GM12878 (cell line): ENCODE measurements at regions of chr2 and their contacts with region 1.

Region 1: GRCh38 chr2:8049851-8050571 is 631.8 kb upstream of the ID2 start:
- DNase-seq: peak; percentile 79
- ATAC-seq: peak; percentile 98
- H3K4me3 ChIP-seq: no peak overlapping the region
- H3K27ac ChIP-seq: peak overlapping the region; percentile 59
- H3K4me1 ChIP-seq: peaks cover 21% of the 10 kb centered on the region
- H3K27me3 ChIP-seq: no peaks in the 10 kb centered on the region
- CTCF ChIP-seq: no peak
- EP300 ChIP-seq: peak; percentile 65 to 69; a peak in 3 of 4 replicates
- POLR2A ChIP-seq: no peak
- RAD21 ChIP-seq: no peak

Region 2: DNA sequence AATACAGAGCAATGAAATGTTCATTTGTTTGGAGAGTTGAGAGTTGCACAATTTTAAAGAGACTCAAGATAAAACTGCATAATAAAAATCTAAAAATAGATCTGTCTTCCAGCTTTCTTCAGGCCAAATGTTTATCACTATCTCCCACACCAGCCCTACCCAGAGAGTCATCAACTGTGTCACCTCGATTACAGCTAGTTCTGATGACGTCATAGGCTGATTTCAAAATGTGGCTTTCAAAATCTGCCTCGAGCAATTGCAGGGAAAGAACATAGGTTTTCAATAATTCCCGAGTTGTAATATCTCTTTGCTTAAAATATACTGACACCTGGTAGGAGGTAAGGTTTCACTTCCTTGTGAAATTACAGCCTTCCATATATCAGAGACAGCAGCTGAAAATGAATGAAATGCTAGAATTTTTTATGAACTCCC is 45.7 kb before region 1 on chr2:
- CTCF ChIA-PET with region 1: interaction called, 3 read pairs
- POLR2A ChIA-PET with region 1: no interaction called
- RAD21 ChIA-PET with region 1: interaction called, 4 read pairs
- SMC1A ChIA-PET with region 1: interaction called, 5 read pairs
- in situ Hi-C with region 1: no loop called
- intact Hi-C with region 1: loop called (anchors 1 kb)
- DNase-seq: no peak
- ATAC-seq: peak; percentile 46
- H3K4me3 ChIP-seq: no peak overlapping the region
- H3K27ac ChIP-seq: no peak overlapping the region
- H3K4me1 ChIP-seq: peaks cover 4% of the 10 kb centered on the region; the same call in 1 of the 2 replicates
- H3K27me3 ChIP-seq: no peaks in the 10 kb centered on the region
- CTCF ChIP-seq: no peak
- EP300 ChIP-seq: peak; percentile 69 to 79; a peak in 2 of 4 replicates
- POLR2A ChIP-seq: no peak
- RAD21 ChIP-seq: no peak

Region 3: GRCh38 chr2:8039732-8040131 is 10.3 kb before region 1 on chr2:
- CTCF ChIA-PET with region 1: interaction called, 4 read pairs
- POLR2A ChIA-PET with region 1: no interaction called
- RAD21 ChIA-PET with region 1: interaction called, 6 read pairs
- SMC1A ChIA-PET with region 1: interaction called, 12 read pairs
- in situ Hi-C with region 1: no loop called
- intact Hi-C with region 1: no loop called
- DNase-seq: no peak
- ATAC-seq: no peak
- H3K4me3 ChIP-seq: no peak overlapping the region
- H3K27ac ChIP-seq: no peak overlapping the region
- H3K4me1 ChIP-seq: peaks cover 6% of the 10 kb centered on the region; the same call in 1 of the 2 replicates
- H3K27me3 ChIP-seq: no peaks in the 10 kb centered on the region
- CTCF ChIP-seq: no peak
- EP300 ChIP-seq: no peak
- POLR2A ChIP-seq: no peak
- RAD21 ChIP-seq: no peak

Region 4: DNA sequence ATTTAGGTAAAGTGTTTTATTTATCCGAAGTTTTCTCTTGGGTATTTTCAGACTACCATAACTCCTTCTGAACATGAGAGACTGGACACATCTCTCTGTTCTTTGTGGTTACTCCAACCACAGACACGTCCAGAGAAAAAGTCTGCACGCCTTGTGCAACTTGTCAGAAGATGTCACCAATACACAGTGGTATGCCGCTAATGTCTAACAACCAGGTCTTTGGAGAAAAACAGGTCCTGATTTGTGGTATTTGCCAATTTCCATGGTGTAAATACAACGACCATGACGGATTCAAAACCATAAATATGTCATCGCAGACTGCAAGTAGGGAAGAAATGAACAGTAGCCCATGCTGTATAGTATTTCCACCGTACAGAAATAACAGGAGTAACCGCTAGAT is 11.2 kb after region 1 on chr2:
- CTCF ChIA-PET with region 1: no interaction called
- POLR2A ChIA-PET with region 1: no interaction called
- RAD21 ChIA-PET with region 1: interaction called, 3 read pairs
- SMC1A ChIA-PET with region 1: interaction called, 13 read pairs
- in situ Hi-C with region 1: no loop called
- intact Hi-C with region 1: no loop called
- DNase-seq: no peak
- ATAC-seq: no peak
- H3K4me3 ChIP-seq: no peak overlapping the region
- H3K27ac ChIP-seq: no peak overlapping the region
- H3K4me1 ChIP-seq: peaks cover 21% of the 10 kb centered on the region
- H3K27me3 ChIP-seq: no peaks in the 10 kb centered on the region
- CTCF ChIP-seq: no peak
- EP300 ChIP-seq: no peak
- POLR2A ChIP-seq: no peak
- RAD21 ChIP-seq: 0 out of 2 replicates have a peak, but pooled peaks have one; percentile 14